Right ventricle myocardium superior (tissue), 1 donor: ENCODE measurements at regions of chr5 and their contacts with region 1.

Region 1: GRCh38 chr5:126354012-126354857 is 69.0 kb upstream of the GRAMD2B start:
- DNase-seq: no peak
- ATAC-seq: peak; percentile 90

Region 2: GRCh38 chr5:126544087-126544740 is 190.0 kb after region 1 on chr5:
- intact Hi-C with region 1: loop called (anchors 1 kb)
- DNase-seq: no peak
- ATAC-seq: peak; percentile 9

Region 3: DNA sequence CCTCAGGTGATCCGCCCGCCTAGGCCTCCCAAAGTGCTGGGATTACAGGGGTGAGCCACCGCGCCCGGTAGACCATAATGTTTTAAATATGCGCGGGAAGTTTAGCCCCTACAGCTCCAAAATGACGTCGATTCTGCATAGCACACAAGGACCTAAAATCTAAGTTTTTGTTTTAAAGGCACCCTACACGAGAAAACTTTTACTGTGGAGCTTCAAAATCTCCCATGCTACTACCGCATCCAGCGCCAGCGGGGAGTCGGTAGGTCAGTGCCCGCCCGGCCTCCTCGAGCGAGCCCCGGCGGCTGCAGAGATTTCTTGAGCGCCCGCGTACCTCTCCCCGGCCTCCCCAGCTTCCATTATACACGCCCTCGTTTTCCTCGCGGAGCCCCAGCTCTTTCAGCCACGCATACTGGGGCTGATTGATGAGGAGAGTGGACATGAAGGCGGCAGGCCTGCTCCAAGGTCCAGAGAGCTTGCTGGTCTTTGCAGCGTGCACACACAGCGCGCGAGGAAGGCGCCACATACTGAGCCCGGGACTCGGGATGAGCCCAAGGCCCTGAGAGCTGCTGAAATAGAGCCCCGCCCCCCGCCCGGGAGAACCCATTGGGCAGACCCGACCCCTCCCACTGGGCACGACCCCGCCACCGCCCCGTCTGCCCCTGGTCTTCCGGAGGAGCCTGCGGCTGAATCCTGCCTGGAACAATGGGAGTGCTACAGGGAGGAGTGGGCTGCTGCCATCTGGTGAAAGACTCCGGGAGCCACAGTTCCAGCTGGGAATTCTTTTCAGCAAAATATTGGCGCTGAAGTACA is 240.6 kb after region 1 on chr5 and contains the start of gene ALDH7A1:
- intact Hi-C with region 1: loop called (anchors 5 kb)
- DNase-seq: peak; percentile 92
- ATAC-seq: peak; percentile 94
- total RNA-seq, gene ALDH7A1: 41.6 TPM